Aorta (tissue), 5 donors: ENCODE measurements at regions of chr9 and their contacts with region 1.

Region 1: GRCh38 chr9:751137-752051 is 90.1 kb upstream of the DMRT1 start:
- DNase-seq: no peak
- ATAC-seq: peak; percentile 17
- H3K4me3 ChIP-seq: no peak overlapping the region
- H3K27ac ChIP-seq: peak overlapping the region; percentile 89 to 93
- H3K4me1 ChIP-seq: peaks cover 3 to 5% of the 10 kb centered on the region in 2 donors
- H3K27me3 ChIP-seq: no peaks in the 10 kb centered on the region

Region 2: DNA sequence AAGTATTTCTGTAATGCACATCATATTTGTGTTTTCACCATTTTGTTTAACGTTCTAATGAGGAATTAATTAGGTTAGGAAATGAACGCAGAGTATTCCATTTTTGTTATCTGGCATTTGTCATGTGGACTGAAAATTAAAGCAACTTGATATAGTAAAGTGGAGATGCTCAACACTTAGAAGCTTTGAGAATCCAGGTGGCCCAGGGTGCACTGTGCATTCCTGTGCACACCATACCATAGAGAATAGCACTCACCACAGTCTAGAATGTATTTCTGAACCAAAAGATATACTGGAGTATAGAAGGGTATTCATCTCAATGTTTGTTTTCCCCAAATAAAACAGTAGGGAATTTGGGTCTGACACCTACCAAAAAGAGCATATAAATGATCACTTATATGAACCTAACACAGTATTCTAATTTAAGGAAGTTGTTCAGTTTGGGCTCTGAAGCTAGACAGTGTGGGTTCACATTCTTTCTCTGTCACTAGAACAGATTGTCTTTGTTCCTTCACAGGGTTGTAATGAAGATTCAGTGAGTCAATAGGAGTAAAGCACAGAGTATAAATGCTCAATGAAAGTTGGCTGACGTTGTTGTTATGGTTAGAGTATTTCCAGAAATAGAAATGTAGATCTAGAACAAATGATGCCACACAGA is 35.5 kb before region 1 on chr9:
- intact Hi-C with region 1: loop called in 1 of 2 experiments (anchors 5 kb)
- DNase-seq: no peak
- ATAC-seq: peak; percentile 64
- H3K4me3 ChIP-seq: peak overlapping the region; percentile 74 to 81
- H3K27ac ChIP-seq: peak overlapping the region; percentile 93 to 99
- H3K4me1 ChIP-seq: peaks cover 0 to under 1% of the 10 kb centered on the region in 2 donors
- H3K27me3 ChIP-seq: no peaks in the 10 kb centered on the region